AG04449 (cell line): ENCODE measurements at regions of chr17 and their contacts with region 1.

Region 1: DNA sequence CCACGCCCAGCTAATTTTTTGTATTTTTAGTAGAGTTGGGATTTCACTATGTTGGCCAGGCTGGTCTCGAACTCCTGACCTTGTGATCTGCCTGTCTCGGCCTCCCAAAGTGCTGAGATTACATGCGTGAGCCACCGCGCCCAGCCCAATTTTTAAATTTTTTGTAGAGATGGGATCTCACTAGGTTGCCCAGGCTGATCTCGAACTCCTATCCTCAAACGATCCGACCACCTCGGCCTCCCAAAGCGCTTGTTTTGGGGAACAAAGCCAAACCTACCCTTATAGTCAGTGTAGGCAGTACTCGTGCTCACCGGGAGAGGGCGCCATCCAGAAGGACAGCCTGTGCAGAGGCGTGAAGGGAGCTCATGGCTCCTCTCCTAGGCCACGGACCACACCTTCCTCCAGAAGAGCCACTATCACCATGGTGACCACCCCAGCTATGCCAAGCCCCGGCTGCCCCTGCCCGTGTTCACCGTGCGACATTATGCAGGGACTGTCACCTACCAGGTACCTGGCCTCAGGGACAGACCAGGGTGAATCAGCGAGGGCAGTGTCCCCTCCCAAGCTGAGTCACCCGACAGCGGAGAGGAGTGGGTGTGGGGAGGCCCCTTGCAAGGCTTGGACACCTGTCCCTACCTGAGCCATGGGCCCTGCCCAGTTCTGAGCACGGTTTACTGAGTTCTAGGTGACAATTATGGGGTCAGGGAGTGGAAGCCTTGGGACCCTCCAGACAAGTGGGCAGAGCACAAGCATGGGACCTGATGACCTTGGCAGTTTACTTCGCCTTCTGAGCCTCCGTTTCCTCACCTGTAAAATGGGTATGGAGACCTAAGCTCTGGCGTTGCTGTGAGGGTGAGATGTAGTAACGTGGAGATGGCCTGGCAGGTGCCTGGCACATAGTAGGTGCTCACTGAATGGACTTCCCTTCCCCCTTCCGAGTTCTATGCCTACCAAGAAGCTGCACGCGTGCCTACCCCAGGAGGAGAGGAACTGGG is 13.8 kb downstream of the MYO15B start:
- DNase-seq: no peak
- H3K4me3 ChIP-seq: no peak overlapping the region
- CTCF ChIP-seq: peak; percentile 66

Region 2: GRCh38 chr17:75565068-75565467 is 36.3 kb before region 1 on chr17:
- CTCF ChIA-PET with region 1: no interaction called
- POLR2A ChIA-PET with region 1: no interaction called
- DNase-seq: no peak
- H3K4me3 ChIP-seq: no peak overlapping the region
- CTCF ChIP-seq: no peak

Region 3: GRCh38 chr17:75589012-75589918 is 12.1 kb before region 1 on chr17:
- CTCF ChIA-PET with region 1: interaction called, 27 read pairs
- POLR2A ChIA-PET with region 1: no interaction called
- DNase-seq: no peak
- H3K4me3 ChIP-seq: peak overlapping the region; percentile 59
- CTCF ChIP-seq: peak; percentile 45

Region 4: GRCh38 chr17:75614006-75614405 is 12.7 kb after region 1 on chr17:
- CTCF ChIA-PET with region 1: interaction called, 38 read pairs
- POLR2A ChIA-PET with region 1: interaction called, 3 read pairs
- DNase-seq: no peak
- H3K4me3 ChIP-seq: no peak overlapping the region
- CTCF ChIP-seq: peak; percentile 13

Region 5: DNA sequence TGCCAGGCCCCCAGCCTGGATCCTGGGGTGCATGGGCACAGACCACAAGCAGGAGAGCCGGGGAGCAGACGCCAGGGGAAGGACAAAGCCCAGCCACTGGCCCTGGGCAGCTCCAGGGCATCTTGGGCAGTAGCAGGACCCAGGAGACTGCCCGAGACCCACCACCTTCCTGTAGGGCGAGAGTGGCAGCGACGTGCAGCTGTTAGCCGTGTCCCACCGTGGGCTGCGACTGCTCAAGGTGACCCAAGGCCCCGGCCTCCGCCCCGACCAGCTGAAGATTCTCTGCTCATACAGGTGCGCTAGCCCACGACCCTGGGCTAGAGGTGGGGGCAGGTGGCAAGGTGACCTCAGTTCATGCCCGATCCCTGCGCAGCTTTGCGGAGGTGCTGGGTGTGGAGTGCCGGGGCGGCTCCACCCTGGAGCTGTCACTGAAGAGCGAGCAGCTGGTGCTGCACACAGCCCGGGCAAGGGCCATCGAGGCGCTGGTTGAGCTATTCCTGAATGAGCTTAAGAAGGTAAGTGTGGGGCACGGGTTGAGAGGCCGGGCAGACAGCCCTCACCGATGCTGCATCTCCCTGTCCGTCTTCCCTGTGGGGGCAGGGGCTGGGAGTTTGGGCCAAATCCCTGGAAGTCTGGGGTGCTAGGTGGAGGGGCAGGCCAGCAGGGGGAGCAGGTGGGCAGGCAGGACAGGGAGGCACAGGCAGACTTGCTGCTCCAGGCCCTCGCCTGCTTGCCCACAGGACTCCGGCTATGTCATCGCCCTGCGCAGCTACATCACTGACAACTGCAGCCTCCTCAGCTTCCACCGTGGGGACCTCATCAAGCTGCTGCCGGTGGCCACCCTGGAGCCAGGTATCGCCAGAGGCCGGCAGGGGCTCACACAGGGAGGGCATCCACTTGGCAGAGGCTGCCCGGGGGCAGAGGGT is 18.4 kb after region 1 on chr17:
- CTCF ChIA-PET with region 1: interaction called, 16 read pairs
- POLR2A ChIA-PET with region 1: no interaction called
- DNase-seq: no peak
- H3K4me3 ChIP-seq: no peak overlapping the region
- CTCF ChIP-seq: peak; percentile 78

Region 6: GRCh38 chr17:75720725-75721462 is 119.5 kb after region 1 on chr17 and contains the start of gene ITGB4:
- CTCF ChIA-PET with region 1: no interaction called
- POLR2A ChIA-PET with region 1: no interaction called
- DNase-seq: no peak
- H3K4me3 ChIP-seq: peak within 1 kb of the TSS; percentile 23; the same call in 1 of the 2 replicates
- CTCF ChIP-seq: no peak